Activated CD8-positive, alpha-beta T cell treated with anti-CD3 and anti-CD28 coated beads, Interleukin-2, amount 10 ng/mL, durations not matched to agents 7 days and 5 days (primary cell): ENCODE measurements at regions of chr4 and their contacts with region 1.

Region 1: GRCh38 chr4:81471588-81472288 is at the start of gene RASGEF1B:
- DNase-seq: peak; percentile 91
- ATAC-seq: peak; percentile 93
- H3K4me3 Mint-ChIP-seq: peak within 1 kb of the TSS; percentile 86
- H3K27ac Mint-ChIP-seq: peak within 1 kb of the TSS; percentile 92
- H3K4me1 Mint-ChIP-seq: peaks cover 35% of the 10 kb centered on the region
- H3K27me3 Mint-ChIP-seq: no peaks in the 10 kb centered on the region
- total RNA-seq, gene RASGEF1B: 2.0 to 2.4 TPM

Region 2: DNA sequence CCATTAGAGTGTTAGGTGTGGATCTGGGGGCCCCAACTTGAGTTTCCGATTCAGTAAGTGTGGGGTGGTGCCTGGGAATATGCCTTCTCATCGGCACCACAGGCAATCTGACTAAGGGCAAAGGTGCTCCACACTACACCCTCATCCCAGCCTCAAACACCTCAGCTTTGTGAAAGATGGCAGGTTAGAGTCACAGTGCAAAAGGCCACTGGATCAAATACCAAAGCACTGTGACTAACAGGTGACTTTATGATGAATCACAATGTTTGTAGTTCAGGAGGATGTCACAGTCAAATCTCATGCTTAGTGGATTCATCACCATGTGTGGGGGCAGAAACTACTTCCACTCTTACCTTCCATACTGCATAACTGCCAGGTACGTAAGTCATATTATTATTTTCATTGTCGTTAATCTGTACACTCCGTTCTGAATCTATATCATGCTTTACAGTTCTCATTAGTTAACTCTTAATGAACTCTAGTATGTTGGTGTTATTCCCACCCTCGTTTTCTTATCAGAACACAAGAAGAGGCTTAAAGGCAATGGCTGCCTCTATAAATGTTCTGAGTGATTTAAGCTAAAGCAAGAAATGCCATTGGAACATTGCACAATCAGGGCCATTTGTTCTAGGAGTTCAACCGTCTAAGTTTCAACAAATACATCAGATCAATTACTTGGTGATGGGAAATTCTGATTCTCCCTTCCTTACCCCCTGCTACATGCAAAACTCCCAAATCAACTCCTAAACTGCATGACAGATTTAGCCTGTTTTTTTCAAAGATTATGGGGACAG is 306.9 kb before region 1 on chr4:
- CTCF ChIA-PET with region 1: no interaction called
- POLR2A ChIA-PET with region 1: no interaction called
- DNase-seq: no peak
- ATAC-seq: no peak
- H3K4me3 Mint-ChIP-seq: no peak overlapping the region
- H3K27ac Mint-ChIP-seq: no peak overlapping the region
- H3K4me1 Mint-ChIP-seq: no peaks in the 10 kb centered on the region
- H3K27me3 Mint-ChIP-seq: no peaks in the 10 kb centered on the region

Region 3: GRCh38 chr4:81207828-81208227 is 263.9 kb before region 1 on chr4:
- CTCF ChIA-PET with region 1: no interaction called
- POLR2A ChIA-PET with region 1: no interaction called
- DNase-seq: no peak
- ATAC-seq: no peak
- H3K4me3 Mint-ChIP-seq: no peak overlapping the region
- H3K27ac Mint-ChIP-seq: no peak overlapping the region
- H3K4me1 Mint-ChIP-seq: no peaks in the 10 kb centered on the region
- H3K27me3 Mint-ChIP-seq: peaks cover 11% of the 10 kb centered on the region

Region 4: DNA sequence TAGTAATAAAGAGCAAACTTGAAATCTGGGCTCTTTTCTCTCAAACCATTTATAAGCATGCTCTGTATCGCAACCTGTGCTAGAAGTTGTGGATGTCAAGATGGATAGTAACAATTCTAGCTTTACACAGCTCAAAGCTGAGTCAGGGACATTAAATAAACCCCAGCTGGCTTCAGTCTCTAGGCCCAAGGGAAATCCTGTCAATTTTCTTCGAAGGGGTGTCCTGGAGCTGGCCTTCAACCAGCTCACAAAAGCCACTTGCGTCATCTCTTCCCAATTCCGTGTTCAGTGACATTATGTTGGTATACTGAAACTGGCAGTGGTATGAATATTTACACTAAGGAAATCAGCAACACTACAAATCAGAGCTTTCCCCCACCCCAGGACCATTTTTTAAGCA is 166.9 kb before region 1 on chr4:
- CTCF ChIA-PET with region 1: no interaction called
- POLR2A ChIA-PET with region 1: no interaction called
- DNase-seq: no peak
- ATAC-seq: no peak
- H3K4me3 Mint-ChIP-seq: no peak overlapping the region
- H3K27ac Mint-ChIP-seq: no peak overlapping the region
- H3K4me1 Mint-ChIP-seq: no peaks in the 10 kb centered on the region
- H3K27me3 Mint-ChIP-seq: peaks cover 5% of the 10 kb centered on the region

Region 5: DNA sequence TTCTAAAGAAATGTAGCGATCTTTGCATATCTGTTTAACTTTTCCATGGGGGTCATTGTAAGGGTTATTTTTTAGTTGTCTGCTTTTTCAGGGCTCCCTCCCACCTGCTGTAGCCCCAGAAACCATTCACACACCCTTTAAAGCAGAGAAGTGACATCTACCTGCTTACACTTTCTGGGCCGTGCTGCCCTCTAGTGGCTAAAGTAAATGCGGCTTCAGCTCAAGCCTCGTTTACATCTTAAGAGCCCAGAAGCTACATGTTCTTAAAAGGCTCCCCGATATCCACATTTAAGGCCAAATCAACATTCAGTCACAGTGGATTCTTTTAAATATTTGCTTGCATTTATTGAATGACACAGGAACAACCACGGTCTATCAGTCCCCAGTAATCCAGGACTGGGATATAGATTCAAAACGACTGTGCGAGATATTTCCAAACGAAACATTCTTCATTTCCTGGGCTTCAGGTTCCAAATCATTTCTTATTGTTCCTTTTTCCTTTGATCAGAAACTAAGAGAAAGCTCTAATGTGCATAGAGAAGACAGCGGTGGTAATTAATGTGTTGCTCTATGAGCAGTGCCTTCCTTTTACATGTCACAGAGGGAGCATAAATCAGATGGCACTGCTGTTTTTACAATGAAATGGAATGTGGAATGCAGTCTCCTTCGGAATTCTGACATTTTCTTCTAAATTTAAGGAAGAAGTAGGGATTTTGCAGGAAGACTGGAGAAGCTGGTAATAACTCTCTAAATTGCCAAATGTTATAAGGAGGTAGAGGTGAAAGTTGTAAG is 119.9 kb before region 1 on chr4:
- CTCF ChIA-PET with region 1: no interaction called
- POLR2A ChIA-PET with region 1: no interaction called
- DNase-seq: peak; percentile 77
- ATAC-seq: peak; percentile 79
- H3K4me3 Mint-ChIP-seq: no peak overlapping the region
- H3K27ac Mint-ChIP-seq: no peak overlapping the region
- H3K4me1 Mint-ChIP-seq: no peaks in the 10 kb centered on the region
- H3K27me3 Mint-ChIP-seq: peaks cover 5% of the 10 kb centered on the region

Region 6: GRCh38 chr4:81454499-81454898 is 17.2 kb before region 1 on chr4:
- CTCF ChIA-PET with region 1: interaction called, 24 read pairs
- POLR2A ChIA-PET with region 1: interaction called, 3 read pairs
- DNase-seq: peak; percentile 54
- ATAC-seq: peak; percentile 75
- H3K4me3 Mint-ChIP-seq: no peak overlapping the region
- H3K27ac Mint-ChIP-seq: peak overlapping the region; percentile 74
- H3K4me1 Mint-ChIP-seq: peaks cover 13% of the 10 kb centered on the region
- H3K27me3 Mint-ChIP-seq: no peaks in the 10 kb centered on the region

Region 7: GRCh38 chr4:81505004-81505598 is 33.4 kb after region 1 on chr4:
- CTCF ChIA-PET with region 1: interaction called, 14 read pairs
- POLR2A ChIA-PET with region 1: interaction called, 7 read pairs
- DNase-seq: peak; percentile 72
- ATAC-seq: peak; percentile 85
- H3K4me3 Mint-ChIP-seq: peak overlapping the region; percentile 37
- H3K27ac Mint-ChIP-seq: peak overlapping the region; percentile 83
- H3K4me1 Mint-ChIP-seq: peaks cover 37% of the 10 kb centered on the region
- H3K27me3 Mint-ChIP-seq: peaks cover 3% of the 10 kb centered on the region

Region 8: GRCh38 chr4:81595798-81596610 is 124.3 kb after region 1 on chr4:
- CTCF ChIA-PET with region 1: interaction called, 14 read pairs
- POLR2A ChIA-PET with region 1: interaction called, 4 read pairs
- DNase-seq: no peak
- ATAC-seq: no peak
- H3K4me3 Mint-ChIP-seq: no peak overlapping the region
- H3K27ac Mint-ChIP-seq: no peak overlapping the region
- H3K4me1 Mint-ChIP-seq: no peaks in the 10 kb centered on the region
- H3K27me3 Mint-ChIP-seq: no peaks in the 10 kb centered on the region

Region 9: DNA sequence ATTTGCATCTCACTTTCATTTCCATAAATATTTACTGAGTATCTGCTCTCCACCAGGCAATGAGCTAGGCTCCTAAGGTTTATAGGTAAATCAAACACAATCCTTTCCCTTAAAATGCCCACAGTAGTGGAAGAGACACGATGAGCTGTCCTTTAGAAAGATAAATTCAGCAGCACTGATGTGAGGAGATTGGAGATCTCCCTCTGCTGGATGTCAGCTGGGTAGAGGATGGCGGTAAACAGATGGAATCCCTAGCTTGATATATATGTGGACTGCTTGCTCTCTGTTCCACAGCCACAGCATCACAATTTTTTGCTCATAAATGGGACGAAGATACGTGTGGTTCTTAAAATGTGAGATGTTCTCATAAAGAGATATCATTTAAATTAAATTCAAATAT is 216.3 kb after region 1 on chr4:
- CTCF ChIA-PET with region 1: interaction called, 29 read pairs
- POLR2A ChIA-PET with region 1: no interaction called
- DNase-seq: no peak
- ATAC-seq: no peak
- H3K4me3 Mint-ChIP-seq: no peak overlapping the region
- H3K27ac Mint-ChIP-seq: no peak overlapping the region
- H3K4me1 Mint-ChIP-seq: no peaks in the 10 kb centered on the region
- H3K27me3 Mint-ChIP-seq: no peaks in the 10 kb centered on the region

Region 10: GRCh38 chr4:81844717-81845116 is 373.0 kb after region 1 on chr4:
- CTCF ChIA-PET with region 1: interaction called, 150 read pairs
- POLR2A ChIA-PET with region 1: no interaction called
- DNase-seq: peak; percentile 79
- ATAC-seq: peak; percentile 90
- H3K4me3 Mint-ChIP-seq: no peak overlapping the region
- H3K27ac Mint-ChIP-seq: no peak overlapping the region
- H3K4me1 Mint-ChIP-seq: no peaks in the 10 kb centered on the region
- H3K27me3 Mint-ChIP-seq: peaks cover 3% of the 10 kb centered on the region

Region 11: GRCh38 chr4:82268050-82268825 is 796.5 kb after region 1 on chr4:
- CTCF ChIA-PET with region 1: interaction called, 10 read pairs
- POLR2A ChIA-PET with region 1: no interaction called
- DNase-seq: peak; percentile 61
- ATAC-seq: peak; percentile 98
- H3K4me3 Mint-ChIP-seq: no peak overlapping the region
- H3K27ac Mint-ChIP-seq: no peak overlapping the region
- H3K4me1 Mint-ChIP-seq: peaks cover 14% of the 10 kb centered on the region
- H3K27me3 Mint-ChIP-seq: peaks cover 6% of the 10 kb centered on the region